Ascending aorta (tissue), 2 donors: ENCODE measurements at regions of chr6 and their contacts with region 1.

Region 1: GRCh38 chr6:154510143-154510905 is at the start of gene CNKSR3:
- DNase-seq: peak; percentile 55 to 93
- H3K4me3 ChIP-seq: peak within 1 kb of the TSS; percentile 67 to 79
- H3K27ac ChIP-seq: peak within 1 kb of the TSS; percentile 91 to 93
- H3K4me1 ChIP-seq: peaks cover 0 to 9% of the 10 kb centered on the region in 2 donors
- H3K27me3 ChIP-seq: no peaks in the 10 kb centered on the region
- CTCF ChIP-seq: peak in 1 of 3 experiments; percentile 16
- total RNA-seq, gene CNKSR3: 9.7 TPM

Region 2: GRCh38 chr6:154080461-154081189 is 429.7 kb before region 1 on chr6:
- intact Hi-C with region 1: no loop called
- DNase-seq: no peak
- H3K4me3 ChIP-seq: no peak overlapping the region
- H3K27ac ChIP-seq: no peak overlapping the region
- H3K4me1 ChIP-seq: no peaks in the 10 kb centered on the region
- H3K27me3 ChIP-seq: no peaks in the 10 kb centered on the region
- CTCF ChIP-seq: no peak

Region 3: GRCh38 chr6:154156135-154156896 is 354.0 kb before region 1 on chr6:
- intact Hi-C with region 1: loop called (anchors 10 kb)
- DNase-seq: no peak
- H3K4me3 ChIP-seq: no peak overlapping the region
- H3K27ac ChIP-seq: no peak overlapping the region
- H3K4me1 ChIP-seq: peaks cover 0 to 3% of the 10 kb centered on the region in 2 donors
- H3K27me3 ChIP-seq: no peaks in the 10 kb centered on the region
- CTCF ChIP-seq: peak; percentile 29 to 50 (median 31)

Region 4: GRCh38 chr6:154448448-154449096 is 61.8 kb before region 1 on chr6:
- intact Hi-C with region 1: loop called (anchors 5 kb)
- DNase-seq: peak in 1 of 2 donors; percentile 77
- H3K4me3 ChIP-seq: peak overlapping the region in 1 of 2 donors; percentile 49
- H3K27ac ChIP-seq: peak overlapping the region; percentile 43 to 64
- H3K4me1 ChIP-seq: peaks cover 0 to 27% of the 10 kb centered on the region in 2 donors
- H3K27me3 ChIP-seq: no peaks in the 10 kb centered on the region
- CTCF ChIP-seq: peak; percentile 15 to 28 (median 18)

Region 5: GRCh38 chr6:154593122-154593521 is 82.8 kb after region 1 on chr6:
- intact Hi-C with region 1: loop called (anchors 5 kb)
- DNase-seq: peak in 1 of 2 donors; percentile 19
- H3K4me3 ChIP-seq: no peak overlapping the region
- H3K27ac ChIP-seq: peak overlapping the region; percentile 8 to 17
- H3K4me1 ChIP-seq: no peaks in the 10 kb centered on the region
- H3K27me3 ChIP-seq: no peaks in the 10 kb centered on the region
- CTCF ChIP-seq: no peak

Region 6: GRCh38 chr6:154733012-154733625 is 222.8 kb after region 1 on chr6 and contains the start of gene SCAF8:
- intact Hi-C with region 1: loop called (anchors 5 kb)
- DNase-seq: peak; percentile 13 to 88
- H3K4me3 ChIP-seq: peak within 1 kb of the TSS; percentile 85 to 97
- H3K27ac ChIP-seq: peak within 1 kb of the TSS; percentile 100
- H3K4me1 ChIP-seq: peaks cover 2 to 39% of the 10 kb centered on the region in 2 donors
- H3K27me3 ChIP-seq: no peaks in the 10 kb centered on the region
- CTCF ChIP-seq: peak; percentile 70 to 89 (median 71)
- total RNA-seq, gene SCAF8: 22.6 TPM

Region 7: GRCh38 chr6:154865291-154865690 is 355.0 kb after region 1 on chr6:
- intact Hi-C with region 1: no loop called
- DNase-seq: no peak
- H3K4me3 ChIP-seq: no peak overlapping the region
- H3K27ac ChIP-seq: no peak overlapping the region
- H3K4me1 ChIP-seq: no peaks in the 10 kb centered on the region
- H3K27me3 ChIP-seq: no peaks in the 10 kb centered on the region
- CTCF ChIP-seq: no peak